Posterior vena cava (tissue), 2 donors: ENCODE measurements at regions of chr6 and their contacts with region 1.

Region 1: GRCh38 chr6:144449911-144450597 is 164.9 kb downstream of the UTRN start:
- DNase-seq: no peak

Region 2: GRCh38 chr6:143564484-143565017 is 885.5 kb before region 1 on chr6:
- intact Hi-C with region 1: loop called in 1 of 2 experiments (anchors 5 kb)
- DNase-seq: no peak